Ascending aorta (tissue), 2 donors: ENCODE measurements at regions of chr4 and their contacts with region 1.

Region 1: DNA sequence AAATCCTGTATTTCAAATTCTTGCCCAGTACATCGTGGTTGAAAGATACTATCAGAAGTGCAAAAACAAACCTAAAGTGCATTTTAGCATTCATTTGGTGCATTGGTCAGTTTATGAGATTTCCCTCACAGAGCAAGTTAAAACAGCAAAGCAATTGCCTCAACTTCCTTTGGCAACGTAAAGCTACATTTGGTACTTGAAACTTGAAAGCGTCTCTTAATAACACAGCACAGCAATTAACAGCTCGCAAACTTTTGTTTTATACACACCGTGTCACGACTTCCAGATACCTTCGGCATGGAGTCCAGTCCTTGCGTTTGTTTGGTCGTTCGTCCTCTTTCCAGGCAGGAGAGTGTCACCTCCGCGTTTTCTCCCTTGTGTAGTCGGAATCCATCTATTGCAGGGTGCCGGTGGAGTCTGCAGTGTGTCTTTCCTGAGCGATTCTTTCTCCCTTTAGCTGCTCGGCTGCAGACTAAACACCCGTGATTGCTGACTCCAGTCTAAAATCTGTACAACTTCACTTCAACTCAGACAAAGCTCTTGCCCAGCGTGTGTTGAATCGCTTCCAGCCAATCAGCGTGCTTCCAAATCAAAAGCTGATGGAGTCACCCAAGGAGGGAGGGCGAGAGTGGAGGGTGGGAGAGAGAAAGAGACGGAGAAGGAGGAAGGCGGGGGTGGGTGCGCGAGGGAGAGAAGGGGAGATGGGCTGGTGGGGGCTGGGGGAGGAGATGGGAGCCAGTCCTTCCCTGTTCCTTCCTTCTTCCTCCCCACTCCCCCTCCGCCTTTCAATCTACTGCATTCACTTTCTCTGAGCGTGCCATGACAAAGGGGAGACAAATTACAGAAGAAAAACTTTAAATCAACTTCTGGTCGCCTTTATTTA is at the start of gene PCDH18:
- DNase-seq: peak; percentile 62 to 96
- H3K4me3 ChIP-seq: peak within 1 kb of the TSS; percentile 73 to 74
- H3K27ac ChIP-seq: peak within 1 kb of the TSS; percentile 82 to 88
- H3K4me1 ChIP-seq: peaks cover 0 to 4% of the 10 kb centered on the region in 2 donors
- H3K27me3 ChIP-seq: no peaks in the 10 kb centered on the region
- CTCF ChIP-seq: no peak
- total RNA-seq, gene PCDH18: 31.6 TPM

Region 2: GRCh38 chr4:137267024-137267423 is 265.2 kb before region 1 on chr4:
- intact Hi-C with region 1: loop called (anchors 5 kb)
- DNase-seq: no peak
- H3K4me3 ChIP-seq: no peak overlapping the region
- H3K27ac ChIP-seq: peak overlapping the region; percentile 45 to 46
- H3K4me1 ChIP-seq: peaks cover 0 to 15% of the 10 kb centered on the region in 2 donors
- H3K27me3 ChIP-seq: no peaks in the 10 kb centered on the region
- CTCF ChIP-seq: no peak

Region 3: GRCh38 chr4:137432446-137433311 is 99.5 kb before region 1 on chr4:
- intact Hi-C with region 1: loop called (anchors 5 kb)
- DNase-seq: no peak
- H3K4me3 ChIP-seq: peak overlapping the region; percentile 14 to 29
- H3K27ac ChIP-seq: peak overlapping the region; percentile 63 to 72
- H3K4me1 ChIP-seq: peaks cover 0 to 5% of the 10 kb centered on the region in 2 donors
- H3K27me3 ChIP-seq: no peaks in the 10 kb centered on the region
- CTCF ChIP-seq: no peak

Region 4: GRCh38 chr4:137601896-137602295 is 69.7 kb after region 1 on chr4:
- intact Hi-C with region 1: no loop called
- DNase-seq: no peak
- H3K4me3 ChIP-seq: no peak overlapping the region
- H3K27ac ChIP-seq: no peak overlapping the region
- H3K4me1 ChIP-seq: no peaks in the 10 kb centered on the region
- H3K27me3 ChIP-seq: no peaks in the 10 kb centered on the region
- CTCF ChIP-seq: no peak

Region 5: DNA sequence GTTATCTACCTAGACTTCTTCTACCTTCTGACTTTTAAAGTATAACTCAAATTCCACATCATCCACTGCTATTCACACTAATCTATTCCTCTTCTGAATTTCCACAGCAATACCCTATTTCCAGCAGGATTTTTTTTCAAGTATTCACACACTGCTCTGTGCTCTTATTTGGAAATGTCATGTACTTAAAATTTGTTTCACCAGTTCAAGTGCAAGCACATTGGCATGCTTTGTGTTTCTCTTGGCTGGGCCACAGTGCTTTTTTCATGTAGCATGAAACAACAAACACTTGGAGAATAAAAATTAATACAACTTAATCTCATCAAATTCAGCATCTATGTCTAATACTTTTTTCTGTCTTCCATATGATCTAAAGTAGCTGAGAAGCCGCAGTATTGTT is 161.9 kb after region 1 on chr4:
- intact Hi-C with region 1: loop called (anchors 10 kb)
- DNase-seq: peak in 1 of 2 donors; percentile 73
- H3K4me3 ChIP-seq: peak overlapping the region in 1 of 2 donors; percentile 2
- H3K27ac ChIP-seq: peak overlapping the region; percentile 52 to 59
- H3K4me1 ChIP-seq: peaks cover 0 to 2% of the 10 kb centered on the region in 2 donors
- H3K27me3 ChIP-seq: no peaks in the 10 kb centered on the region
- CTCF ChIP-seq: no peak

Region 6: DNA sequence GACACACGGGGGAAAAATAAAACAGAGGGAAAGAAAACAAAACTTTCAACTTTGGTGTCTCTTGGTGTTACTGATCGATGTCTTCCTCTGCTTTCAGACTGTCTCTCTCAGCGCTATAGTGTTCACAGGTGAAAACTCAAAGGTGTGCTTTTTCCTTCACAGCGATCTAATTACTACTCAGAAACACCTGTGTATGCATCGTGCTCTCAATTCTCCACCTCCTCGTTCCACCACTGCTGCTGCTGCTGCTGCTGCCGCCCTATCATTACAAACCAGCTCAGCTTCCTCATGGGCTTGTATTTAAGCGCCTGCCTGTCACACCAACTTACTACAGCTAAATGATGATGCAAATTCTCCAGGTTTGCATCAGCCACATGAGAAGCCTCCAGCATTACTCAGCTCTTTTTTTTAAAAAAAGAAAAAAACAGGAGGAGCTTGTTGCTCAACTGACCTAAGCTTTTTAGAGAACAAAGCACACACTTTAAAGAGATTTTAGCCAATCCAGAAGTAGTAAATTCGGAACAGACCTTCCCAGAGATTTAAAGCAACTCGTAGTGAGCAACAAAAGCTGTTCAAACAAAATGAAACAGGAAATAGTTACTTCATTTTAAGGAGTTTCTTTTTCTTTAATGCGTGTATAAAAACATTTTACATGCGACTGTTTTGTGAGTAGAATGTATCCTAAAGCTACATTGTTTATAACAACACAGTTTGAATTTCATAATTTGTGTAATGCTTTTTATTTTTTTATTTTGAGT is 710.0 kb after region 1 on chr4 and contains the start of gene SLC7A11:
- intact Hi-C with region 1: loop called (anchors 5 kb)
- DNase-seq: peak; percentile 31 to 73
- H3K4me3 ChIP-seq: peak within 1 kb of the TSS; percentile 28 to 56
- H3K27ac ChIP-seq: peak within 1 kb of the TSS; percentile 28 to 43
- H3K4me1 ChIP-seq: peaks cover 0 to 3% of the 10 kb centered on the region in 2 donors
- H3K27me3 ChIP-seq: no peaks in the 10 kb centered on the region
- CTCF ChIP-seq: no peak
- total RNA-seq, gene SLC7A11: 0.75 TPM